Activated B cell treated with CpG ODN at 0.5 μM for 24 hours (primary cell): ENCODE measurements at regions of chr12 and their contacts with region 1.

Region 1: GRCh38 chr12:26471560-26471959 is 276.2 kb downstream of the SSPN start:
- DNase-seq: no peak
- ATAC-seq: peak; percentile 60
- H3K4me3 Mint-ChIP-seq: peak overlapping the region; percentile 49
- H3K27ac Mint-ChIP-seq: peak overlapping the region; percentile 86
- H3K4me1 Mint-ChIP-seq: peaks cover 54% of the 10 kb centered on the region
- H3K27me3 Mint-ChIP-seq: no peaks in the 10 kb centered on the region
- CTCF ChIP-seq: no peak

Region 2: DNA sequence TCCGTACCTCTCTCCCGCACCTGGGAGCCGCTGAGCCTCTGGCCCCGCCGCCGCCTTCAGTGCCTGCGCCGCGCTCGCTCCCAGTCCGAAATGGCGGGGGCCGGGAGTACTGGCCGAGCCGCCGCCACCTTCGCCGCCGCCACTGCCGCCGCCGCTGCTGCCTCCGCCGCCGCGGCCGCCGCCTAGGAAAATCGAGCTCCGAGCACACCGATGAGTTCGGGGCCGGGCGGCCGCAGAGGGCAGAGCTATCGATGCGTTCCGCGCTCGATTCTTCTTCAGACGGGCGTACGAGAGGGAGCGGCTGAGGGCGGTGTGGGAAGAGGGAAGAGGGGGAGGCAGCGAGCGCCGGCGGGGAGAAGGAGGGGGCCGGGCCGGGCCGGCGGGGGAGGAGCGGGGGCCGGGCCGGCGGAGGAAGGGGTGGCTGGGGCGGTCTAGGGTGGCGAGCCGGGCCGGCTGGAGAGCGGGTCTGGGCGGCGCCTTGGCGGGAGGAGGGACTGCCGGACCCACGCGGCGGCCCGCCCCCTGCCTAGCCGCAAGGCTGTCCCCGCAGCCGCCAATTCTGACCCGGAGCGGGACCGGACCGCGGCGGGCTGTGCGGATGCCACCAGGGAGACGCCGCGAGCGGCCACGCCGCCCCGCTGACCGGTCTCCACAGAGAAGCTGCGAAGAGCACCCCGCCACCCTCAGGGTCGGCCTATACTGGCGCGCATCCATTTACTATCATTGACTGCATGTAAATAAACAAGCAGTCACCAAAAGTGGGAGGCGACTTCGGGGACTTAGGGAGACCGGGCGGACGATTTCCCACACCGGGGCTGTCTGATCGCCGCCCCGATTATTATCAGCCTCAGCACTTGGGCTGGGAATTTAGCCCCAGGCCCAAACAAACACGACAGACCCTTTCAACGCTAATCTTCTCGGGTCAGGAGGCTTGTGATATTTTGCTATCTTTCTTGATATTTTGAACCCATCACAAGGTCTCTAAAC is 1220.5 kb before region 1 on chr12 and contains the start of gene KRAS:
- CTCF ChIA-PET with region 1: no interaction called
- POLR2A ChIA-PET with region 1: no interaction called
- intact Hi-C with region 1: loop called (anchors 5 kb)
- DNase-seq: peak; percentile 88
- ATAC-seq: peak; percentile 85
- H3K4me3 Mint-ChIP-seq: peak within 1 kb of the TSS; percentile 95
- H3K27ac Mint-ChIP-seq: peak within 1 kb of the TSS; percentile 95
- H3K4me1 Mint-ChIP-seq: peaks cover 48% of the 10 kb centered on the region
- H3K27me3 Mint-ChIP-seq: no peaks in the 10 kb centered on the region
- CTCF ChIP-seq: no peak
- total RNA-seq, gene KRAS: 43.3 and 45.8 TPM in 2 replicates

Region 3: DNA sequence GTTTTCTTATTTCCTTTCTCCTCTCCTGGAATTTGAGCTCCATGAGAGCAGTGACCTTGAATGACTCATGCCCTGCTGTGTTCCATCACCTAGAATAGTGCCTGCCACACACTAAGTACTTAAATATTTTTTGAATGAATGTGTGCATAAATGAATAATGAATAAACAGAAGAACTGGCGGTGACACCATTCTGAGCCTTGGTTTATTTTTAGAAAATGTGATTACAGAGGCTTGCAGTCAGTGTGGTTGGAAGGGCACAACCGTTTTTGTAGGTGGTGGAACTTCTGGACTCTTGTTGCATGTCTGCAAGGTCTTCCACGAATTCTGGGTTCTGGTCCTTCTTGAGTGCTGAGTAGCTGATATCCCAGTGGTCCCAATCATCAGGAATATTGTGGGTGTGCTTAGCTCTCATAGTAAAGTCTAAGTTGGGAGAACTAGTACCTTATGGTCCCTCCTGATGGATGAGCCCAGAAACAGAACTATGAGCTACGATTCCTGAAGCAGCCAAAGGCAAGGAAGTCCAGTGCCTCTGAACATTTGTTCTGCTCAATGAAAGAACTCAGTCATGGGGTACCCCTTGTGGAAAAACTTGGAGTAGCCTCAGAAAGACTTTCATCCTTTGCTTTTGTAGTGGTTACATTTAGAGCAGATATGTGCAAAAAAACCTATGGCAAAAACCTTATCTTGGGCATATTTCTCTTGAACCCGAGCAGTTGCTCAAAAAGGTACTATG is 318.0 kb before region 1 on chr12:
- CTCF ChIA-PET with region 1: interaction called, 3 read pairs
- POLR2A ChIA-PET with region 1: interaction called, 3 read pairs
- intact Hi-C with region 1: loop called (anchors 2 kb)
- DNase-seq: no peak
- ATAC-seq: no peak
- H3K4me3 Mint-ChIP-seq: no peak overlapping the region
- H3K27ac Mint-ChIP-seq: peak overlapping the region; percentile 27
- H3K4me1 Mint-ChIP-seq: peaks cover 77% of the 10 kb centered on the region
- H3K27me3 Mint-ChIP-seq: no peaks in the 10 kb centered on the region
- CTCF ChIP-seq: no peak

Region 4: GRCh38 chr12:26298785-26299621 is 172.6 kb before region 1 on chr12:
- CTCF ChIA-PET with region 1: no interaction called
- POLR2A ChIA-PET with region 1: no interaction called
- intact Hi-C with region 1: loop called (anchors 1 kb)
- DNase-seq: no peak
- ATAC-seq: peak; percentile 98
- H3K4me3 Mint-ChIP-seq: peak overlapping the region; percentile 63
- H3K27ac Mint-ChIP-seq: peak overlapping the region; percentile 80
- H3K4me1 Mint-ChIP-seq: peaks cover 34% of the 10 kb centered on the region
- H3K27me3 Mint-ChIP-seq: no peaks in the 10 kb centered on the region
- CTCF ChIP-seq: no peak

Region 5: GRCh38 chr12:26434299-26435068 is 37.1 kb before region 1 on chr12:
- CTCF ChIA-PET with region 1: interaction called, 5 read pairs
- POLR2A ChIA-PET with region 1: no interaction called
- intact Hi-C with region 1: loop called (anchors 1 kb)
- DNase-seq: no peak
- ATAC-seq: peak; percentile 86
- H3K4me3 Mint-ChIP-seq: no peak overlapping the region
- H3K27ac Mint-ChIP-seq: no peak overlapping the region
- H3K4me1 Mint-ChIP-seq: no peaks in the 10 kb centered on the region
- H3K27me3 Mint-ChIP-seq: no peaks in the 10 kb centered on the region
- CTCF ChIP-seq: peak; percentile 74

Region 6: GRCh38 chr12:26523708-26524150 is 52.2 kb after region 1 on chr12:
- CTCF ChIA-PET with region 1: no interaction called
- POLR2A ChIA-PET with region 1: no interaction called
- intact Hi-C with region 1: loop called (anchors 2 kb)
- DNase-seq: no peak
- ATAC-seq: no peak
- H3K4me3 Mint-ChIP-seq: no peak overlapping the region
- H3K27ac Mint-ChIP-seq: no peak overlapping the region
- H3K4me1 Mint-ChIP-seq: peaks cover 20% of the 10 kb centered on the region
- H3K27me3 Mint-ChIP-seq: no peaks in the 10 kb centered on the region
- CTCF ChIP-seq: no peak